Spleen (tissue), 13 donors: ENCODE measurements at regions of chr11 and their contacts with region 1.

Region 1: DNA sequence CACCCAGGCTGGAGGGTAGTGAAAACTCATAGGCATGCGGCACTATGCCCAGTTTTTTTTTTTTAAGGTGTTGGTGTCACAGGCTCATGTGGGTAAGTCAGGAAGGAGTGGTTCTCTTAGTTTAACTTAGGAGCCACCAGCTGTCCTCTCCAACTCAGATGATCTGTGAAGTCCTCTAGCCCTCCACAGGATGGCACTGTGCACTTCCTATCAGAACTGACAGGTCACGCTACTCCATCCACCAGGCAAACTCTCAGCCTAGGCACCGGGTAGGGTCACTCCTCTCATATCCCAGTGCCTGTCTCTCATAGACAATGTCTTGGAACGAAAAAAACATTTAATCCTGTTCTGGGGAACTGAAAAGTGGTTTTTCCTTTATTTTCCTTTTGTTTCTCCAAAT is 16.5 kb downstream of the NAP1L4 start:
- DNase-seq: no peak
- H3K4me3 ChIP-seq: no peak overlapping the region
- H3K27ac ChIP-seq: no peak overlapping the region
- H3K4me1 ChIP-seq: peaks cover 0 to 39% (median 1%) of the 10 kb centered on the region in 6 donors
- H3K27me3 ChIP-seq: no peaks in the 10 kb centered on the region
- CTCF ChIP-seq: peak in 8 of 11 experiments; percentile 16 to 58 (median 40)
- POLR2A ChIP-seq: no peak

Region 2: GRCh38 chr11:3021125-3021524 is 45.5 kb after region 1 on chr11:
- intact Hi-C with region 1: loop called (anchors 10 kb)
- DNase-seq: no peak
- H3K4me3 ChIP-seq: no peak overlapping the region
- H3K27ac ChIP-seq: no peak overlapping the region
- H3K4me1 ChIP-seq: peaks cover 0 to 30% (median 19%) of the 10 kb centered on the region in 6 donors
- H3K27me3 ChIP-seq: no peaks in the 10 kb centered on the region
- CTCF ChIP-seq: peak in 6 of 11 experiments; percentile 19 to 61 (median 34)
- POLR2A ChIP-seq: no peak

Region 3: DNA sequence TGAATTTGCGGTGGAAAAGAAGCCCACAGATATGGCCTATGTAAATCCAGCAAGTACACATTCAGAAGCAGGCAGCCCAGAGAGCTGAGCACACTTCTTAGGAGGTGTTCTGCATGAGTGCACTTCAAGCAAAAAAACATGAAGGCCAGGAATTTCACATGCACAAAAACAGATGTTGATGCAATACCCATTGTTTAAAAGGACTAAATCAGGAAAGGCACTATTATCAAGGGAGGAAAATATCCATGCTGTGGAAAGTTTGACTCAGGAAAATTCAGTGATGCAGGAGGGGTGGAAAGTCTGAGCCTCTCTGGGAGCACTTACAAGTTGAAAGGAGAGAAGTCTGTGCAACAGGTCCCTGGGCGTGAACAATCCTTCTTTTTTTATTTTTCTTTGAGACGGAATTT is 97.4 kb after region 1 on chr11:
- intact Hi-C with region 1: loop called (anchors 10 kb)
- DNase-seq: no peak
- H3K4me3 ChIP-seq: no peak overlapping the region
- H3K27ac ChIP-seq: no peak overlapping the region
- H3K4me1 ChIP-seq: no peaks in the 10 kb centered on the region
- H3K27me3 ChIP-seq: peaks cover 0 to 6% (median 0%) of the 10 kb centered on the region in 7 donors
- CTCF ChIP-seq: no peak
- POLR2A ChIP-seq: no peak

Region 4: DNA sequence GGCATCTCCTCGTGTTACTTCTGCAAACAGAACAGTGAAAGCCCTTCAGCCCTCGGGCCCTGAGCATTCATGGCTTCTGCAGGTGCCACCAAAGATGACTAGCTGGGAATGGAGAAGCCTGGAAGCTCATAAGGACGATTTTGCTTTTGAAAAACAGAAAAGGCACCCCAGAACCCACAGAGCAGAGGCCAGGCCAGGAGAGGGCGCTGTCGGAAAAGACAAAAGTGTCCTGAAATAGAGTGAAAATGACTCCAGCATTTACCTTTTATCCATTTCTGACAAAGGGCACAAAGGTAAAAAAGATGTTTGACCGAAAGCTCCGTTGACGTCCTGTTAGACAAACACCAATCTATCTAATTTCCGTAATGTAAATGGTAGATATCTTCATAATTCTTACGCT is 365.7 kb after region 1 on chr11:
- intact Hi-C with region 1: no loop called
- DNase-seq: no peak
- H3K4me3 ChIP-seq: no peak overlapping the region
- H3K27ac ChIP-seq: no peak overlapping the region
- H3K4me1 ChIP-seq: no peaks in the 10 kb centered on the region
- H3K27me3 ChIP-seq: peaks cover 0 to 30% (median 0%) of the 10 kb centered on the region in 7 donors
- CTCF ChIP-seq: peak; percentile 29 to 79 (median 66)
- POLR2A ChIP-seq: no peak